CD8-positive, alpha-beta T cell (primary cell): ENCODE measurements at regions of chr4 and their contacts with region 1.

Region 1: GRCh38 chr4:38730830-38731646 is 51.8 kb downstream of the TLR10 start:
- DNase-seq: peak; percentile 60 to 90 (median 81)
- ATAC-seq: peak; percentile 75
- H3K4me3 ChIP-seq: no peak overlapping the region
- H3K4me3 Mint-ChIP-seq: no peak overlapping the region
- H3K27ac ChIP-seq: no peak overlapping the region
- H3K27ac Mint-ChIP-seq: no peak overlapping the region
- H3K4me1 ChIP-seq: peaks cover 7% of the 10 kb centered on the region
- H3K4me1 Mint-ChIP-seq: peaks cover 11% of the 10 kb centered on the region
- H3K27me3 ChIP-seq: no peaks in the 10 kb centered on the region
- H3K27me3 Mint-ChIP-seq: no peaks in the 10 kb centered on the region
- CTCF ChIP-seq: peak; percentile 91

Region 2: DNA sequence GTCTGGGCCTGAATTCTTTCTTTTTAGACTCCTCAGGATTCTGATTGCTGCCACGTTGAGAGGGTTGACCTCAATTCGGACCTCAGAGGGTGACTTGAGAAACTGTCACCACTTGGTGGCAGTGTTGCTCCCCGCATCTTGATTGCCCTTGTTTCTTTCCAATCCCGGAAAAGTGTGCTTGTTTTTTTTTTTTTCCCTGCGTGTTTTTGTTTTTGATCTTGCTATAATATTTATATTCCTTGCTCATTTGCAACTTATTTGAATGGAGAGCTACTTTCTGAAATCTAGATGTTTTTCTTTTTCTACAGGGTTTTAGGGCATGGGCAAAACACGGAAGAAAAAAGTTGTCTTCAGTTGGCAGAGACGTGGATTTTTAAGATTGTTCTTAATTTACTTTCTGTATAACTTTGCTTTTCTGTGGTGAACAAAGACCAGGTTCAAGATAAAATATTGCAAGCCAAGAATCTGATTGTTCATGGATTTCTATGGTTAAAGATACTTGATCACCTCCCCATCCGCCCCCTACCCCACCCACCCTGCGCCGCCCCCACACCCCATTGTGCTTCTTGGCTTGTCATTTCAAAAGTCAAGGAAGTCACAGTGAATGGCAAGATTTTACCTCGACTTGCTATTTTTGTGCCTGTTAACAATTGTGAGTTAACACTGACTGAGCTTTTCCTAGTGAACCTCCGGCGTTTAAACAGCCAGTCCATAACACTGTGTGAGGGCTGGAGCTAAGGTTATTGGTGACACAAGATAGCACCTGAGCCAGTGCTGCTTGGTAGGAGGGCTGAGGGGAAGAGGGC is 668.7 kb before region 1 on chr4:
- CTCF ChIA-PET with region 1: interaction called, 51 read pairs
- POLR2A ChIA-PET with region 1: no interaction called
- intact Hi-C with region 1: loop called (anchors 1 kb)
- DNase-seq: peak; percentile 24 to 80 (median 67)
- ATAC-seq: peak; percentile 59
- H3K4me3 ChIP-seq: peak overlapping the region in 1 of 2 experiments; percentile 13
- H3K4me3 Mint-ChIP-seq: peak overlapping the region; percentile 83
- H3K27ac ChIP-seq: no peak overlapping the region
- H3K27ac Mint-ChIP-seq: peak overlapping the region; percentile 11
- H3K4me1 ChIP-seq: no peaks in the 10 kb centered on the region
- H3K4me1 Mint-ChIP-seq: peaks cover 12% of the 10 kb centered on the region
- H3K27me3 ChIP-seq: no peaks in the 10 kb centered on the region
- H3K27me3 Mint-ChIP-seq: no peaks in the 10 kb centered on the region
- CTCF ChIP-seq: peak; percentile 97

Region 3: GRCh38 chr4:38562751-38563198 is 168.3 kb before region 1 on chr4:
- CTCF ChIA-PET with region 1: no interaction called
- POLR2A ChIA-PET with region 1: no interaction called
- intact Hi-C with region 1: loop called in 1 of 2 experiments (anchors 1 kb)
- DNase-seq: no peak
- ATAC-seq: no peak
- H3K4me3 ChIP-seq: no peak overlapping the region
- H3K4me3 Mint-ChIP-seq: no peak overlapping the region
- H3K27ac ChIP-seq: no peak overlapping the region
- H3K27ac Mint-ChIP-seq: no peak overlapping the region
- H3K4me1 ChIP-seq: no peaks in the 10 kb centered on the region
- H3K4me1 Mint-ChIP-seq: peaks cover 20% of the 10 kb centered on the region
- H3K27me3 ChIP-seq: no peaks in the 10 kb centered on the region
- H3K27me3 Mint-ChIP-seq: no peaks in the 10 kb centered on the region
- CTCF ChIP-seq: no peak

Region 4: GRCh38 chr4:39020130-39020529 is 289.1 kb after region 1 on chr4:
- CTCF ChIA-PET with region 1: no interaction called
- POLR2A ChIA-PET with region 1: no interaction called
- intact Hi-C with region 1: no loop called
- DNase-seq: no peak
- ATAC-seq: no peak
- H3K4me3 ChIP-seq: no peak overlapping the region
- H3K4me3 Mint-ChIP-seq: no peak overlapping the region
- H3K27ac ChIP-seq: no peak overlapping the region
- H3K27ac Mint-ChIP-seq: no peak overlapping the region
- H3K4me1 ChIP-seq: no peaks in the 10 kb centered on the region
- H3K4me1 Mint-ChIP-seq: peaks cover 3% of the 10 kb centered on the region
- H3K27me3 ChIP-seq: no peaks in the 10 kb centered on the region
- H3K27me3 Mint-ChIP-seq: no peaks in the 10 kb centered on the region
- CTCF ChIP-seq: no peak

Region 5: DNA sequence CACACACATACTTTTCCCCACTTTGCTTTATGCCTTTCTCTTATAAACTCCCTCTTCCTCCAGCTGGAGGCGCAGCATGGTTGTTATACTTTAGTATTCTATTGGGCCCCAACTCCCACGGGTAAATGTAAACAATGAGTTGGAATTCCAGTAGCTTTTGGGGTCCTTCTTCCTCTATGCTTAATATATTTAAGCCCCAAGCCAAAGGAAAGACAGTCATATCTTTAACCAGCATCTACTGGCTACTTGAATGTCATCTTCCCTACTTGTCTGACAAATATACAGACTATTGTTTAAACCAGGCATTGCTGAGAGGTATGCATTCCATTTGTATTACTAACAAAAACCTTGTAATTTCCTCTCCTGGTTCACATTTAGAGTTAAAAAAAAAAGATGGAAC is 524.2 kb after region 1 on chr4:
- CTCF ChIA-PET with region 1: no interaction called
- POLR2A ChIA-PET with region 1: no interaction called
- intact Hi-C with region 1: no loop called
- DNase-seq: no peak
- ATAC-seq: no peak
- H3K4me3 ChIP-seq: no peak overlapping the region
- H3K4me3 Mint-ChIP-seq: no peak overlapping the region
- H3K27ac ChIP-seq: no peak overlapping the region
- H3K27ac Mint-ChIP-seq: no peak overlapping the region
- H3K4me1 ChIP-seq: no peaks in the 10 kb centered on the region
- H3K4me1 Mint-ChIP-seq: no peaks in the 10 kb centered on the region
- H3K27me3 ChIP-seq: no peaks in the 10 kb centered on the region
- H3K27me3 Mint-ChIP-seq: no peaks in the 10 kb centered on the region
- CTCF ChIP-seq: no peak